ENCODE measurements at regions of chr6 and their contacts with region 1.

Region 1: GRCh38 chr6:50848989-50849795 is 30.5 kb downstream of the TFAP2B start:
- DNase-seq: no peak
- H3K4me3 ChIP-seq: no peak overlapping the region
- H3K27ac ChIP-seq: no peak overlapping the region
- H3K4me1 ChIP-seq: peaks cover 6% of the 10 kb centered on the region
- H3K27me3 ChIP-seq: peaks cover 21% of the 10 kb centered on the region
- CTCF ChIP-seq: no peak

Region 2: DNA sequence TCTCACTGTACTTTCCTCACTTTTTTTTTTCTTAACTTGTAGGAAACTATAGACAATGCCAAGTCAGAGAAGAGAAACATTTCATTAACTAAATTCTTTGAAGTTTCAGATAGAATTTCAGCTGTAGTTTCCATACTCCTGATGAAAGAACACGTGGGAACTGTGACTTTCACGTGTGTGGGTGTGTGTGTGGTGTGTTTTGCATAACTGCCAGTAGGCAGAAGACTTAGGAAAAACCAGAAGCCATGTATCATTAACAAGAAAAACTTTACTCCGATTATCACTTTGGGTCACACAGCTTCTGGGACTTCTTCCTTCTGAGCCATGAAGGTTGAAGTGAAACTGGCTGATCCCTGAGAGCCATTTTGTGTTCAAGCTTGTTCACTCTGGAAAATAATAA is 452.8 kb after region 1 on chr6:
- CTCF ChIA-PET with region 1: interaction called, 10 read pairs
- dilution Hi-C with region 1: no loop called
- in situ Hi-C with region 1: no loop called
- intact Hi-C with region 1: no loop called
- DNase-seq: no peak
- H3K4me3 ChIP-seq: no peak overlapping the region
- H3K27ac ChIP-seq: no peak overlapping the region
- H3K4me1 ChIP-seq: peaks cover 14% of the 10 kb centered on the region
- H3K27me3 ChIP-seq: no peaks in the 10 kb centered on the region
- CTCF ChIP-seq: no peak